Ascending aorta (tissue), 2 donors: ENCODE measurements at regions of chrX and their contacts with region 1.

Region 1: GRCh38 chrX:57821703-57822375 is 88.4 kb downstream of the ZXDA start:
- DNase-seq: no peak
- H3K4me3 ChIP-seq: peak overlapping the region in 1 of 2 donors; percentile 48
- H3K27ac ChIP-seq: no peak overlapping the region
- H3K4me1 ChIP-seq: no peaks in the 10 kb centered on the region
- H3K27me3 ChIP-seq: no peaks in the 10 kb centered on the region
- CTCF ChIP-seq: peak; percentile 49 to 66 (median 61)

Region 2: GRCh38 chrX:57643698-57644097 is 178.1 kb before region 1 on chrX:
- intact Hi-C with region 1: no loop called
- DNase-seq: no peak
- H3K4me3 ChIP-seq: no peak overlapping the region
- H3K27ac ChIP-seq: no peak overlapping the region
- H3K4me1 ChIP-seq: no peaks in the 10 kb centered on the region
- H3K27me3 ChIP-seq: no peaks in the 10 kb centered on the region
- CTCF ChIP-seq: no peak

Region 3: DNA sequence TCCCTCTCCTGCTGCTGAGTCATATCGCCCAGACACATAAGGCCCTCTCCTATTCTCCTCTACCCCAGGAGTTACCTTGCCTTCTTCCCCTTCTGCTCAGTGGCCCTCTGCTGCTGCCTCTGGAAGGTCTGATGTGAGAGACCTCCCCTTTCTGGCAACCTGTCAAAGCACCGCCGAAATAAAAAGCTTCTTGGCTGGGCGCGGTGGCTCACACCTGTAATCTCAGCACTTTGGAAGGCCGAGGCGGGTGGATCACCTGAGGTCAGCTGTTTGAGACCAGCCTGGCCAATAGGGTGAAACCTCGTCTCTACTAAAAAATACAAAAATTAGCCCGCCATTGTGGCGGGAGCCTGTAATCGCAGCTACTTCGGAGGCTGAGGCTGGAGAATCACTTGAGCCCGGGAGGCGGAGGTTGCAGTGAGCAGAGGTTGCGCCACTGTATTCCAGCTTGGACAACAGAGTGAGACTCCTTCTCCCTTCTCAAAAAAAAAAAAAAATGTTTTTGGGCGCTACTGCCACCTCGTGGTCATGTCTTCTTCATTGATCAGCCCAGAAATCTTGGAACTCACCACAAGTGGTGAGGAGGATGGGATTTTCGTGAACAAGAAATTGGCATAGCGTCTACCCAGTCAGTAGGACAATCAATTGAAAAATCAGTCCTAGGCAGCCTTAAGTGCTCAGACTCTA is 97.1 kb after region 1 on chrX:
- intact Hi-C with region 1: loop called (anchors 2 kb)
- DNase-seq: no peak
- H3K4me3 ChIP-seq: peak overlapping the region in 1 of 2 donors; percentile 7
- H3K27ac ChIP-seq: no peak overlapping the region
- H3K4me1 ChIP-seq: no peaks in the 10 kb centered on the region
- H3K27me3 ChIP-seq: no peaks in the 10 kb centered on the region
- CTCF ChIP-seq: peak in 2 of 3 experiments; percentile 32 to 52

Region 4: DNA sequence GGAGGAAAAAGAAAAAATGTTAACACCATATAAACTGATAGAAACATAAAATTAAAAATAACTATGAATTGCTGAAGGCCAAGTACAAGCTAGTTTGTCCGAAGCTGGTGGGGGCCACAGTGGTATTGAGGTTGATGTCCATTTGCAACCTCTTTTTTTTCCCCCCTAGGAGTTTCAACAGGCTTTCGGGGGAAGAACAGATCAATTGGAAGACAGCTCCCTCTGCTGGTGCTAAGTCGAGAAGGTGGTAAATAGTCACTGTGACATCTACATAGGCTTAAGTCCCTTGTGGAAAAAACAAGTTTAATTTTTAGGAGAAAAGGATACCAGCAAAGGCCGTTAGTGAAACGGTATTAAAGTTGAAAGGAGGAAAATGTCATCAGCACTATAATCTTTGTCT is 204.1 kb after region 1 on chrX:
- intact Hi-C with region 1: loop called (anchors 10 kb)
- DNase-seq: no peak
- H3K4me3 ChIP-seq: no peak overlapping the region
- H3K27ac ChIP-seq: no peak overlapping the region
- H3K4me1 ChIP-seq: no peaks in the 10 kb centered on the region
- H3K27me3 ChIP-seq: no peaks in the 10 kb centered on the region
- CTCF ChIP-seq: peak in 2 of 3 experiments; percentile 40 to 51